Naive thymus-derived CD4-positive, alpha-beta T cell (primary cell): ENCODE measurements at regions of chr3 and their contacts with region 1.

Region 1: DNA sequence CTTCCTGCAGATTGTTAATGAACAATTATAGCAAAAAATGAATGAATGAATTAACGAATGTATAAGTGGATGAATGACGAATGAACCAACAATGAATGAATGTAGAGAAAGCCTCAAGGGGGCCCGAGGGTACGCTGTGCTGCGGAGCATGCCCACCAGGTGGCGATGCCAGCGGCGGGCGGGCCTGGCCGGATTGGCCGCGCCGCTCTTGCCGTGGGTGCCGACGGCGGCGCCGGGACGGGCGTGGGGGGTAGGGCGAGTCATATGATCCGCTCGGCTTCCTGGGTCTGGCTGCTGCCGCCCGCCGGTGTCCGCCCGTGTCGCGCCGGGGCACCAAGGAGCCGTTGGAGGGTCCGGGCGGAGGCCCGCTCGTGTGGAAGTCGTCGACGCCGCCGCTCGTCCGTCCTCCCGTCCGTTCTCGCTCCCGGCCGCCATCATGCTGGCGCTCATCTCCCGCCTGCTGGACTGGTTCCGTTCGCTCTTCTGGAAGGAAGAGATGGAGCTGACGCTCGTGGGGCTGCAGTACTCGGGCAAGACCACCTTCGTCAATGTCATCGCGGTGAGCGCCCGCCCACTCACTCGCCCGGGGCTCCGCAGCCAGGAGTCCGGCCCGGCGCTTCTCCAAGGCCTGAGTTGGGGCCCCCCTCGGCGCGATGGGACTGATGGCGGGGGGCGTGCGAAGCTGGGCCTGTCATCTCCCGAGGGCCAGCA is at the start of gene ARL8B:
- DNase-seq: peak; percentile 82 to 97 (median 89)
- ATAC-seq: peak; percentile 100
- H3K4me3 ChIP-seq: peak within 1 kb of the TSS; percentile 92
- H3K4me3 Mint-ChIP-seq: peak within 1 kb of the TSS; percentile 81 to 96 (median 88)
- H3K27ac ChIP-seq: peak within 1 kb of the TSS; percentile 88
- H3K27ac Mint-ChIP-seq: peak within 1 kb of the TSS; percentile 79 to 96 (median 88)
- H3K4me1 ChIP-seq: peaks cover 22% of the 10 kb centered on the region in 2 donors
- H3K4me1 Mint-ChIP-seq: peaks cover 25 to 54% (median 47%) of the 10 kb centered on the region in 7 donors
- H3K27me3 ChIP-seq: no peaks in the 10 kb centered on the region
- H3K27me3 Mint-ChIP-seq: no peaks in the 10 kb centered on the region
- total RNA-seq, gene ARL8B: 43.7 to 61.6 (median 48.4) TPM

Region 2: DNA sequence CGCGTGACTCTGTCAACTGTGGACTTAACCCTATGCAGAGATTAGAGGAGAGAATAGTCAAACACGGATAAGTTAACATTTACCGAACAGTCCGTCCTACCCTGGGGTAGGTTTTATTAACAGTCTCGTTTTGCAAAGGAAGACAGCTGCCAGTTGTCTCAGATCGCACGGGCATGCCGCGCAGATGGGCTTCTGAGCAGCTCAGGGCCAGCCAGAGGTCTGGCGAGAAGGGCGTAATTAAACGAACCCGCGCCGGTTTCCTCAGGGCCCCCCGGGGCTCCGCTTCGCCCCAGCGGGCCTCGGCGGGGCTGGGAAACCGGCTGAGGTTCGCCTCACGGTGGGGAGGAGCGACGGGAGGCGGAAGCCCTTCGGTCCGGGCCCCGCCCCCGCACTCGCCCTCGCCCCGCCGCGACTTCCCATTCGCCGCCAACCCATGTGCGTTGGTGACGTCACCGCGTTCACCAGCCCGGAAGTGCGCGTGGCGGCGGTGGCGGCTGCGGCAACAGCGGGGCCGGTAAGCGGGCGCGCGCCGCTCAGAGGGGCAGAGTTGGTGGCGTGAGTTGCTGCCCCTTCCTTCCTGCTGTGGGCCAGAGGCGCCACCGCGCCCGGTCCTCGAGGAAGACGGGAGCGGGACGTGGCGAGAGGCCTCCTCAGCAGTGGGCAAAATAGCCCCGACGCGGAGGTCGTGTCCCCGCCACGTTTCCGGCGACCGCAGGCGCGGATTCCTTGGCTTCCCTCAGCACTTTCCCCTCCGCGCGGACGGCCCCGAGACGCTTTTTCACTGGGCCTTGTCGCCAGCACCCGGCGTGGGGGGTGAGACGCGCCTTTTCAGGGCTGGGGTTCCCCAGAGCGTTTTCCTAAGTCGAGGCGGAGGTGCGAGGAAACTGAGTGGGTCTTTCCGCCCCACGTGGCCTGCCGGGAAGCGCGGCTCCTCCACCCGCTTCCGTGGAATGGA is 1995.4 kb before region 1 on chr3 and contains the start of gene TRNT1:
- CTCF ChIA-PET with region 1: no interaction called
- POLR2A ChIA-PET with region 1: no interaction called
- intact Hi-C with region 1: loop called (anchors 1 to 5 kb)
- DNase-seq: peak; percentile 92 to 97 (median 96)
- ATAC-seq: peak; percentile 97
- H3K4me3 ChIP-seq: peak within 1 kb of the TSS; percentile 92
- H3K4me3 Mint-ChIP-seq: peak within 1 kb of the TSS; percentile 94 to 100 (median 96)
- H3K27ac ChIP-seq: peak within 1 kb of the TSS; percentile 96
- H3K27ac Mint-ChIP-seq: peak within 1 kb of the TSS; percentile 96 to 99 (median 97)
- H3K4me1 ChIP-seq: peaks cover 10 to 25% of the 10 kb centered on the region in 2 donors
- H3K4me1 Mint-ChIP-seq: peaks cover 12 to 48% (median 42%) of the 10 kb centered on the region in 7 donors
- H3K27me3 ChIP-seq: no peaks in the 10 kb centered on the region
- H3K27me3 Mint-ChIP-seq: no peaks in the 10 kb centered on the region
- total RNA-seq, gene TRNT1: 36.4 to 44.5 (median 38.8) TPM

Region 3: GRCh38 chr3:4303187-4304123 is 818.7 kb before region 1 on chr3 and contains the start of gene SETMAR:
- CTCF ChIA-PET with region 1: no interaction called
- POLR2A ChIA-PET with region 1: no interaction called
- intact Hi-C with region 1: loop called (anchors 1 to 5 kb)
- DNase-seq: peak; percentile 73 to 86 (median 82)
- ATAC-seq: peak; percentile 97
- H3K4me3 ChIP-seq: peak within 1 kb of the TSS; percentile 92
- H3K4me3 Mint-ChIP-seq: peak within 1 kb of the TSS; percentile 88 to 99 (median 97)
- H3K27ac ChIP-seq: peak within 1 kb of the TSS; percentile 91
- H3K27ac Mint-ChIP-seq: peak within 1 kb of the TSS; percentile 92 to 99 (median 98)
- H3K4me1 ChIP-seq: peaks cover 0 to 8% of the 10 kb centered on the region in 2 donors
- H3K4me1 Mint-ChIP-seq: peaks cover 8 to 45% (median 34%) of the 10 kb centered on the region in 7 donors
- H3K27me3 ChIP-seq: no peaks in the 10 kb centered on the region
- H3K27me3 Mint-ChIP-seq: no peaks in the 10 kb centered on the region
- total RNA-seq, gene SETMAR: 6.4 to 13.7 (median 12.5) TPM

Region 4: GRCh38 chr3:4712143-4712542 is 410.0 kb before region 1 on chr3:
- CTCF ChIA-PET with region 1: interaction called, 6 read pairs
- POLR2A ChIA-PET with region 1: no interaction called
- intact Hi-C with region 1: loop called in 1 of 2 experiments (anchors 1 kb)
- DNase-seq: no peak
- ATAC-seq: no peak
- H3K4me3 ChIP-seq: no peak overlapping the region
- H3K4me3 Mint-ChIP-seq: no peak overlapping the region
- H3K27ac ChIP-seq: no peak overlapping the region
- H3K27ac Mint-ChIP-seq: no peak overlapping the region
- H3K4me1 ChIP-seq: no peaks in the 10 kb centered on the region
- H3K4me1 Mint-ChIP-seq: peaks cover 0 to 38% (median 0%) of the 10 kb centered on the region in 7 donors
- H3K27me3 ChIP-seq: no peaks in the 10 kb centered on the region
- H3K27me3 Mint-ChIP-seq: no peaks in the 10 kb centered on the region

Region 5: DNA sequence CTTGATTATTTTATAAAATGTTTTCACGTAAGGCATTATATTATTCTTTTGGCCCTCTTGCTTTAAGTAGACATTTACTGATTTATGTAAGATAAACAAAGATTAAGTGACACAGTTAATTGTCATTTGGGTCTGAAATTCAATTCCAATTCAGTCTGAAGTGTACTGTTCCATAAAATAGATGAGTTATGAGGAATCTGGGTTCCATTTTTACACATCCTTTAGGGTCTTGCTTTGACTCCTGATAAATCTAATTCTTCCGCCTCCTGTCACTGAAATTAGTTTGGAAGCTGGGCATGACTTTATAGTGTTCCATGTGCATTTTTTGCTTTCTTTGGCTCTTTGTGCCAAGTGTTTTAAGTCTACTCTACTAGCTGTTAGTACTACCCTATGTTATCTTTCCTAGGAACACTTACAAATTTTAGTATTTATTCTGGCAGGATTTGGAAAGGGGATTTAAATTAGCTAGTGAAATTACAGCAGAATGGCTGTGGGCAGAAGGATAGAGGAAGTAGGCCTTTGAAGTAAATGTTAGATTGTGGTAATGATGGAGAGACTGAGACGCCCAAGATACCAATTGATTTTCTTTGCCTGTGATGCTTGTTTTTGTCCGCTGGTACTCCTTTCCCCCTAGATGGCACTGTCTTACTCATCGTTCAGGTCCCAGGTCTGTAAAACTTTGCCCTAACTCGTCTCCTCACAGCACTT is 14.2 kb after region 1 on chr3:
- CTCF ChIA-PET with region 1: interaction called, 3 read pairs
- POLR2A ChIA-PET with region 1: interaction called, 4 read pairs
- intact Hi-C with region 1: loop called (anchors 1 kb)
- DNase-seq: peak in 7 of 9 donors; percentile 42 to 69 (median 61)
- ATAC-seq: peak; percentile 89
- H3K4me3 ChIP-seq: no peak overlapping the region
- H3K4me3 Mint-ChIP-seq: peak overlapping the region in 4 of 10 donors; percentile 0 to 23 (median 10)
- H3K27ac ChIP-seq: peak overlapping the region; percentile 9
- H3K27ac Mint-ChIP-seq: peak overlapping the region; percentile 12 to 82 (median 47)
- H3K4me1 ChIP-seq: peaks cover 10 to 13% of the 10 kb centered on the region in 2 donors
- H3K4me1 Mint-ChIP-seq: peaks cover 43 to 80% (median 74%) of the 10 kb centered on the region in 7 donors
- H3K27me3 ChIP-seq: no peaks in the 10 kb centered on the region
- H3K27me3 Mint-ChIP-seq: no peaks in the 10 kb centered on the region

Region 6: DNA sequence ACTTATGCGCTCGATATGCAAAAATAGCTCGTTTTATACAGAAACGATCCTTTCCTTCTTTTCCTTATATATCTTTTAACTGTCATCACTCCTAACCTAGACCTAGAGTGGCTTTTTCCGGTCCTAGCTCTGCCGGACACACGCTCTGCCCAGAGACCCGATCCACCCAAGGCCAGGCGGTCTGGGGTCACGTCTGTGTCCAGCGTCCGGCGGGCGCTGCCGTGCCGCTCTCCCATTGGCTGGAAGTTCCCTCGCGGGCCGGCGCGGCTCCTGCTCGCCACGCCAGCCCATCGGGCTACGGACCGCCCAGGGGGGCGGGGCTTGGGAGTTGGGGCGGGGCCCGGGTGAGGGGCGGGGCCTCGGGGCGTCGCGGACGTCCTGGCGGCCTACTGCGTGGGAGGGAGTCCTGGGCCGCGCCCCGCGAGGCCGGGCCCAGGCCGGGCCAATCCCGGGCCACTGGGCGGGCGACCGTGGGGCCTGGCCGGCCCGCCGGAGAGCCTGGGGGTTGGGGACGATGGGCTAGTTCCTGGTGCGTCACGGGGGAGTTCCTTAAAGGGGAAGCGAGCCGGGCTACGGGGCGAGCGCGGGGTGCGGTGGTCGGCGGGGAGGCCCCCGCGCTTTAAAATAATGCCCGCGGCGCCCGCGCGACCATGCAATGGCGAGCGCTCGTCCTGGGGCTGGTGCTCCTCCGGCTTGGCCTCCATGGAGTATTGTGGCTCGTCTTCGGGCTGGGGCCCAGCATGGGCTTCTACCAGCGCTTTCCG is 65.2 kb after region 1 on chr3 and contains the start of gene EDEM1:
- CTCF ChIA-PET with region 1: interaction called, 3 read pairs
- POLR2A ChIA-PET with region 1: interaction called, 14 read pairs
- intact Hi-C with region 1: loop called (anchors 1 kb)
- DNase-seq: peak; percentile 81 to 100 (median 88)
- ATAC-seq: peak; percentile 95
- H3K4me3 ChIP-seq: peak within 1 kb of the TSS; percentile 89
- H3K4me3 Mint-ChIP-seq: peak within 1 kb of the TSS; percentile 90 to 100 (median 98)
- H3K27ac ChIP-seq: peak within 1 kb of the TSS; percentile 97
- H3K27ac Mint-ChIP-seq: peak within 1 kb of the TSS; percentile 95 to 100 (median 98)
- H3K4me1 ChIP-seq: peaks cover 13 to 21% of the 10 kb centered on the region in 2 donors
- H3K4me1 Mint-ChIP-seq: peaks cover 14 to 41% (median 32%) of the 10 kb centered on the region in 7 donors
- H3K27me3 ChIP-seq: no peaks in the 10 kb centered on the region
- H3K27me3 Mint-ChIP-seq: no peaks in the 10 kb centered on the region
- total RNA-seq, gene EDEM1: 97.3 to 138 (median 126) TPM